WTC11 (cell line): ENCODE measurements at regions of chr1 and their contacts with region 1.

Region 1: GRCh38 chr1:11594222-11594621 is 60.0 kb downstream of the FBXO2 start:
- DNase-seq: peak; percentile 53
- ATAC-seq: peak; percentile 77
- H3K4me3 Mint-ChIP-seq: no peak overlapping the region
- H3K27ac Mint-ChIP-seq: no peak overlapping the region
- H3K4me1 Mint-ChIP-seq: peaks cover 23% of the 10 kb centered on the region
- H3K27me3 Mint-ChIP-seq: no peaks in the 10 kb centered on the region
- CTCF ChIP-seq: no peak

Region 2: DNA sequence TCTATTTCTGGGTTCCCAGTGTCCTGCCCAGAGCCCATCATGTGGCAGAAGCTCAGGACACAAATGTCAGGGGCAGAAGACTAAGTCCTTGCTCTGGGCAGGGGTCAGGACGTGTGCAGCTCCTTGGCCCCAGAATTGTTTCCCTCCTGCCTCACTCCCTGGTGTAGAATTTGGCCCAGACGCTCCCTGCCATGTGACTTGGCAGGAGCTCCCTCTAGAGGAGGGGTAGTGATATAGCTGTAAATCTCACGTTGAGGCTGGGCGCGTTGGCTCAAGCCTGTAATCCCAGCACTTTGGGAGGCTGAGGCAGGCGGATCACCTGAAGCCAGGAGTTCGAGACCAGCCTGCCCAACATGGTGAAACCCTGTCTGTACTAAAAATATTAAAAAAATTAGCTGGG is 230.1 kb before region 1 on chr1:
- CTCF ChIA-PET with region 1: no interaction called
- POLR2A ChIA-PET with region 1: no interaction called
- DNase-seq: peak; percentile 39
- ATAC-seq: peak; percentile 55
- H3K4me3 Mint-ChIP-seq: no peak overlapping the region
- H3K27ac Mint-ChIP-seq: no peak overlapping the region
- H3K4me1 Mint-ChIP-seq: peaks cover 26% of the 10 kb centered on the region
- H3K27me3 Mint-ChIP-seq: peaks cover 19% of the 10 kb centered on the region
- CTCF ChIP-seq: peak; percentile 60

Region 3: GRCh38 chr1:11611638-11612327 is 17.6 kb after region 1 on chr1:
- CTCF ChIA-PET with region 1: interaction called, 12 read pairs
- POLR2A ChIA-PET with region 1: no interaction called
- DNase-seq: no peak
- ATAC-seq: peak; percentile 75
- H3K4me3 Mint-ChIP-seq: no peak overlapping the region
- H3K27ac Mint-ChIP-seq: no peak overlapping the region
- H3K4me1 Mint-ChIP-seq: no peaks in the 10 kb centered on the region
- H3K27me3 Mint-ChIP-seq: peaks cover 2% of the 10 kb centered on the region
- CTCF ChIP-seq: no peak

Region 4: DNA sequence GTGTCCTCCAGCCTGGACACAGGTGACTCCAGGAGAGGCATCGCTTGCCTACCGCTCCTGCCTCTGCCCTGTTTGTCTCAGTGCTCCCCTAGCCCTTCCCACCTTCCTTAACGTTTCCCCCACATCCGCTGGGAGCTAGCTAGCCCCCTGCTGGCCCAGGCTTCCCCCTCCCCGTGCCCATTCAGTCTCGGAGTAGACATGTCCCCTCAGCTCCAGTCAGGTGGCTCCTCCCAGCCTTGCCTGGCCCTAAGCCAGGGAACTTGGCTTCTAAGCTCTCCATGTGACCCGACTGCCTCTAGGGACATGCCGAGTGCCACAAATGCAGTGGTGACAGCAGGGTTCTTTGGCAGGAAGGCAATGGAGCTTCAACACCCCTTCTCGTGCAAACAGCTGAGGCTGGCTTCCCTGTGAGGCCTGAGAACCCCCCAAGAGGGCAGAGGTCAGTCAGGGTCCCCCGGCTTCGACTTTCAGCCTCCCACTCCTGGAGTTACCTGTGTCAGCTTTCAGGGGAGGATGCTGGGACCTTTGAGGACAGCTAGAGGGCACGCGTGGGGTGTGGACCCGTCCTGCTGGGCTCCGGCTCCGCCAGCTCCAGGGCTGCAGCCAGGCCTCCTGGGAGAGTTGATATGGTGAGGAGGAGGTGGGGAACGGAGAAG is 113.5 kb after region 1 on chr1:
- CTCF ChIA-PET with region 1: no interaction called
- POLR2A ChIA-PET with region 1: no interaction called
- DNase-seq: no peak
- ATAC-seq: peak; percentile 19
- H3K4me3 Mint-ChIP-seq: no peak overlapping the region
- H3K27ac Mint-ChIP-seq: peak overlapping the region; percentile 25; the same call in 1 of the 2 replicates
- H3K4me1 Mint-ChIP-seq: peaks cover 48% of the 10 kb centered on the region
- H3K27me3 Mint-ChIP-seq: no peaks in the 10 kb centered on the region
- CTCF ChIP-seq: no peak

Region 5: GRCh38 chr1:11749203-11749689 is 155.0 kb after region 1 on chr1:
- CTCF ChIA-PET with region 1: no interaction called
- POLR2A ChIA-PET with region 1: no interaction called
- DNase-seq: peak; percentile 60
- ATAC-seq: peak; percentile 88
- H3K4me3 Mint-ChIP-seq: no peak overlapping the region
- H3K27ac Mint-ChIP-seq: peak overlapping the region; percentile 61; the same call in 1 of the 2 replicates
- H3K4me1 Mint-ChIP-seq: peaks cover 30% of the 10 kb centered on the region
- H3K27me3 Mint-ChIP-seq: no peaks in the 10 kb centered on the region
- CTCF ChIP-seq: no peak